Heart left ventricle (tissue), 16 donors: ENCODE measurements at regions of chr10 and their contacts with region 1.

Region 1: GRCh38 chr10:51092402-51092801 is 18.1 kb downstream of the PRKG1 start:
- DNase-seq: peak; percentile 60 to 91 (median 83)
- ATAC-seq: peak; percentile 66 to 91 (median 86)
- H3K4me3 ChIP-seq: no peak overlapping the region
- H3K27ac ChIP-seq: peak overlapping the region in 9 of 12 donors; percentile 28 to 57 (median 45)
- H3K4me1 ChIP-seq: peaks cover 0 to 73% (median 38%) of the 10 kb centered on the region in 12 donors
- H3K27me3 ChIP-seq: no peaks in the 10 kb centered on the region
- CTCF ChIP-seq: no peak
- POLR2A ChIP-seq: no peak

Region 2: DNA sequence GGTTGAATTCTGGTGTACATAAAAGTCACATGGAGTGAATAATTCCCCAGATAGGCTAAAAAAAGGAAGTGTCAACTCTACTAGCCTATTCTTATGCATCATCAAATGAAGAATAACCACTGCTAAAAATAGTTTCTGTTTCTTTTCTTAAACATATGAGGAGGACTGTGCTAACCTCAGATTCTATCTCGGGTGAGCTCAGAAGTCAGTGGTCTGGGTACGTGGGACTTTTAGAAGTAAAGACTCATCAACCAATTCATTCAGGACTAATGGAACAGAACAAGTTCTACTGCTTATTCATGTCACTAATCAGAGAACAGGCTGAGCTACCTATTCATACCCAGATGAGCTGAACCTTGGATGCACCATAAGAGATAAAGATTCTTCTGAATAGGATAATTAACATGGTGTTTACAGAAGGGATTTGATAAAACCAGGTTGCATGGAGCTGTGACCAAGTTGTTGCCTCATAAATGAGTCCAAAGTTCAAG is 831.6 kb before region 1 on chr10:
- intact Hi-C with region 1: no loop called
- DNase-seq: no peak
- ATAC-seq: no peak
- H3K4me3 ChIP-seq: no peak overlapping the region
- H3K27ac ChIP-seq: no peak overlapping the region
- H3K4me1 ChIP-seq: peaks cover 0 to 12% (median 0%) of the 10 kb centered on the region in 12 donors
- H3K27me3 ChIP-seq: peaks cover 0 to 5% (median 0%) of the 10 kb centered on the region in 9 donors
- CTCF ChIP-seq: no peak
- POLR2A ChIP-seq: no peak

Region 3: DNA sequence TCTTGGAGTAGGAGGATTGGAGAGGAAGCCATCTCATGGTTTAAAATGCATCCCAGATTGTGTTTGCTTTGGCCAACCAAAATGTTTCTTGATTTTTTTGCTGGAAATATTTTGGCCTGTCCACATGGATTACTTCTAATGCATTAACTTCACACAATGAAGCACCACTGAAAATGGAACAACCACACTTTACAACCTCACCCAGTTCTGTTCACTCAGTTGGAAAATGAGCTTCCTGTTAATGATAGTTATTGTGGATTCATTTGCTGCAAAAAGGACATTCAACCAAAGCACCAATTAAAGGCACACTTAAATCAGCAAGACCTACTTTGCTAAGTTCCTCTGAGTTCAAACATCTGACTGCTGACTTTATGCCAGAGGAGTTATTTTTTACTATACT is 195.7 kb before region 1 on chr10:
- intact Hi-C with region 1: no loop called
- DNase-seq: no peak
- ATAC-seq: no peak
- H3K4me3 ChIP-seq: no peak overlapping the region
- H3K27ac ChIP-seq: no peak overlapping the region
- H3K4me1 ChIP-seq: no peaks in the 10 kb centered on the region
- H3K27me3 ChIP-seq: peaks cover 0 to 3% (median 0%) of the 10 kb centered on the region in 9 donors
- CTCF ChIP-seq: no peak
- POLR2A ChIP-seq: no peak

Region 4: GRCh38 chr10:51108406-51108805 is 16.0 kb after region 1 on chr10:
- intact Hi-C with region 1: loop called in 1 of 10 experiments (anchors 1 kb)
- DNase-seq: no peak
- ATAC-seq: peak; percentile 33 to 71 (median 54)
- H3K4me3 ChIP-seq: no peak overlapping the region
- H3K27ac ChIP-seq: no peak overlapping the region
- H3K4me1 ChIP-seq: peaks cover 0 to 27% (median 8%) of the 10 kb centered on the region in 12 donors
- H3K27me3 ChIP-seq: no peaks in the 10 kb centered on the region
- CTCF ChIP-seq: no peak
- POLR2A ChIP-seq: no peak

Region 5: DNA sequence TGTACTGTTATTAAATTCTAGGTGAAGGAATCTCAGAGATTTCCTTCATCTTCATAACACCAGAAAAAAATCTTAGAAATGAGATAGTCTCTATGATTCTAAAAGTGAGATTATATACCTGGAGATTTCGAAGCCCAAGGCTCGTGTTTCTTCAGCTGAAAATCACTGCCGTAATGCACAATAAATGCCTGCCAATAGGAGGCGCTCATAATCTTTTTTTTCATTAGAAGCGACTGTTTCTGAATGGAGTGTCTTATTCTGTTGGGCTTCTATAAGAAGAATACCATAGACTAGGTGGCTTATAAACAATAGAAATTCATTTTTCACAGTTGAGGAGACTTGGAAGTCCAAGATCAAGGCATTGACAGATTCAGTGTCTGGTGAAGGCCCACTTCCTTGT is 276.5 kb after region 1 on chr10:
- intact Hi-C with region 1: loop called in 1 of 10 experiments (anchors 5 kb)
- DNase-seq: no peak
- ATAC-seq: no peak
- H3K4me3 ChIP-seq: no peak overlapping the region
- H3K27ac ChIP-seq: no peak overlapping the region
- H3K4me1 ChIP-seq: peaks cover 0 to 43% (median 11%) of the 10 kb centered on the region in 12 donors
- H3K27me3 ChIP-seq: no peaks in the 10 kb centered on the region
- CTCF ChIP-seq: peak in 1 of 12 donors; percentile 7
- POLR2A ChIP-seq: no peak